PC-3 (cell line): ENCODE measurements at regions of chr7 and their contacts with region 1.

Region 1: DNA sequence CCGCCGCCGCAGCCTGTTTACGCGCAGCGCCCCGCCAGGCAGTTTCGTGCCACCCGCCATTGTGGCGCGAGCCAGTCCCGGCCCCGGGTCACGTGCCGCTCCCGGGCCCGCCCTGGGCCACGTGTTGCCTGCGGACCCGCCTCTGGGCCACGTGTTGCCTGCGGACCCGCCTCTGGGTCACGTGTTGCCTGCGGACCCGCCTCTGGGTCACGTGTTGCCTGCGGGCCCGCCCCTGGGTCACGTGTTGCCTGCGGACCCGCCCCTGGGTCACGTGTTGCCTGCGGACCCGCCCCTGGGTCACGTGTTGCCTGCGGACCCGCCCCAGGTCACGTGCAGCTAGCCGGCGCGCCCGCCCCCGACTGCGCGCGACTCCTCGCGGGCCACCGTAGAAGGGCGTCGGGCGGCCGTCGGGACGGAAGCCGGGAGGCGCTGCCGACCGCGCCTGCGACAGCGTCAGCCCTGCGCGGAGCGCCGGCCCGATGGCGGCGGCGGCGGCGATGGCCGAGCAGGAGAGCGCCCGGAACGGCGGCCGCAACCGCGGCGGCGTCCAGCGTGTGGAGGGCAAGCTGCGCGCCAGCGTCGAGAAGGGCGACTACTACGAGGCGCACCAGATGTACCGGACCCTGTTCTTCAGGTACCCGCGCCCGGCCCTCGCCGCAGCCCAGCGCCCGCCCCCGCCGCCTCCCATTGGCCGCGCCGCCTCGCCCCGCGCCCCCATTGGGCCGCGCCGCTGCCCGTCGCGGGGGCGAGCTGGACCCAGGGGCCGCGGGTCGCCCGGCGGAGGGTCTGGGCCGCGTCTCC is at the start of gene GET4:
- DNase-seq: peak; percentile 90
- ATAC-seq: peak; percentile 80
- H3K4me3 ChIP-seq: peak within 1 kb of the TSS; percentile 97
- H3K27ac ChIP-seq: peak within 1 kb of the TSS; percentile 30
- H3K4me1 ChIP-seq: peaks cover 28% of the 10 kb centered on the region
- H3K27me3 ChIP-seq: no peaks in the 10 kb centered on the region
- CTCF ChIP-seq: no peak
- total RNA-seq, gene GET4: 96.7 and 115 TPM in 2 replicates

Region 2: DNA sequence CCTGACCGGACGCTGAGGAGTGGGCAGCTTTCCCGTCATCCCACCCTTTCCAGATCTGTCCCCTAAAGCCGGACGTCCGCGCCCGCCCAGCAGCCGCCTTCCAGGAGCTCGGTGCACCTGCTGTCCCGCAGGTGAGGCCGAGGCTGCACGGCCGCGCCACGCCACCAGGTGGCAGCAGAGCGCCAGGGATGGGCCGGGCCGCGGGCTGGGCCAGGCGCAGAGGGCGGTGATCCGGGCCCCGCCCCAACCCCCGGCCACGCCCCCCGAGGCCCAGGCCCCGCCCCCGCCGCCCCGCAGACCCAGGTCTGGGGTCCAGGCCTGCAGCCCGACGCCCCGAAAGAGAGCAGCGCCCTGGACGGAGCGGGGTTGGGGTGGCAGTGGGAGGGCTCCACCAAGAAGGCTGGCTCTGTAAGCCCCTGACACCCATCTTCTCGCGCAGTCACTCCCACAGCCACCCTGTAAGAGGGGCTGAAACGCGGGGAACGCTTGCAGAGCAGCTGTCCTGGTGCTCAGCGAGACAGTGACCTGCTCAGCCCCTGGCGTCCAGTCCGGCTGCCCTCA is 554.2 kb before region 1 on chr7:
- CTCF ChIA-PET with region 1: no interaction called
- POLR2A ChIA-PET with region 1: no interaction called
- intact Hi-C with region 1: loop called (anchors 5 kb)
- DNase-seq: peak; percentile 81
- ATAC-seq: peak; percentile 97
- H3K4me3 ChIP-seq: no peak overlapping the region
- H3K27ac ChIP-seq: no peak overlapping the region
- H3K4me1 ChIP-seq: no peaks in the 10 kb centered on the region
- H3K27me3 ChIP-seq: peaks cover 18% of the 10 kb centered on the region
- CTCF ChIP-seq: peak; percentile 68

Region 3: DNA sequence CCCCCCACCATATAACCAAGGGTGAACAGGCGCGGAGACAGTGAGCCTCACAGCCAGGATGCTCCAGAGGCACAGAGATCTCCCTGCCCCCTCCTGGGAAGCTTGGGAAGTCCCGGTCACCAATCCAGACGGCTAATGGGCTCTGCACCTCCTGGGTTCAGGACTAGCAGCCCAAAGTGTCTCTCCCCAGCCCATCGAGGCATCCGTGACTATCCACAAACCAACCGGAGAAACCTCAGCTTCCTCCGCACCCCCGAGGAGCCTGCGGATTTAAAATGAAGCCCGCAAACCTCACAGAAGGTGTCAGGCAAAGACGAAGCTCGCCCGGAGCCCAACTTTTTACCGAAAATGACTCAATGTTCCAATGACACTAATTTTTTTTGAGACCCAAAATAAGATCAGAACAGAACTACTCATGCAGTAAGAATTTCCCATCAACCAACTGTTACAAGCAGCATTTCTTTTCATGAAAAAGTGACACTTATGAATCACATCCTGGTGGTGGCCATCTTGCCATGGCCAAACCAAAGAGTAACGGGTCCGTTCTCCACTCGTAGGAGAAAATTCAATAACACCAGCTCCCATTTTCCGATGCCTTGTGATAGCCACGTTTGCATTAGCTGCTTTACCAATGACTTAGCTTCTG is 362.7 kb before region 1 on chr7:
- CTCF ChIA-PET with region 1: no interaction called
- POLR2A ChIA-PET with region 1: no interaction called
- intact Hi-C with region 1: no loop called
- DNase-seq: peak; percentile 9
- ATAC-seq: no peak
- H3K4me3 ChIP-seq: no peak overlapping the region
- H3K27ac ChIP-seq: no peak overlapping the region
- H3K4me1 ChIP-seq: no peaks in the 10 kb centered on the region
- H3K27me3 ChIP-seq: no peaks in the 10 kb centered on the region
- CTCF ChIP-seq: no peak

Region 4: DNA sequence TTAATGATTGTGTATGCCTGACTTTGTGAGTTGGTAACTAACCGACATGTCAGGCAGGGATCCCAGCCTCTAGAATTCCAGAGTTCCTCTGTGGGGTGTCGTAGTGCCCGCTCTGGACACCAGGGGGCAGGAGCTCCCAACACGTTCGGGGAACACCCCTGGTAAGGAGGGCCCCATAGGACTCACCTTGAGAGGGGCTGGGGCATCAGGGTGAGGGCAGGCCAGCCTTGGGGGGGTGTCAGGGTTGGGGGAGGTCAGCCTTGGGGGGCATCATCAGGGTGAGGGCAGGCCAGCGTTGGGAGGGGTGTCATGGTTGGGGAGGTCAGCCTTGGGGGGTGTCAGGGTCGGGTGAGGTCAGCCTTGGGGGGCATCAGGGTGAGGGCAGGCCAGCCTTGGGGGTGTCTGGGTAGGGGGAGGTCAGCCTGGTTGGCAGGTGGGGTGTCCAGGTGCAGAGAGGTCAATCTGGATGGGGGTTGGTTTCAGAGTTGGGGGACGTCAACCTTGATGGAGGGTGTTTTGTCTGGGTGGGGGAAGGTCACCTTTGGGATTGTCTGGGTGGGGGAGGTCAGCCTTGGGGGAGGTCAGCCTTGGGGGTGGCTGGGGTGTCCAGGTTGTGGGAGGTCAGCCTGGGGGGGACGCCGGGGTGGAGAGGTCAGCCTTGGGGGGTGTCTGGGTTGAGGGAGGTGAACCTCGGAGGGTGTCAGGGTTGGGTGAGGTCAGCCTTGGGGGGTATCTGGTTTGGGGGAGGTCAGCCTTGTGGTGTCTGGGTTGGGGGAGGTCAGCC is 89.7 kb before region 1 on chr7:
- CTCF ChIA-PET with region 1: no interaction called
- POLR2A ChIA-PET with region 1: no interaction called
- intact Hi-C with region 1: loop called (anchors 1 kb)
- DNase-seq: peak; percentile 71
- ATAC-seq: peak; percentile 85
- H3K4me3 ChIP-seq: no peak overlapping the region
- H3K27ac ChIP-seq: no peak overlapping the region
- H3K4me1 ChIP-seq: no peaks in the 10 kb centered on the region
- H3K27me3 ChIP-seq: no peaks in the 10 kb centered on the region
- CTCF ChIP-seq: peak; percentile 88

Region 5: GRCh38 chr7:816300-816750 is 60.0 kb before region 1 on chr7:
- CTCF ChIA-PET with region 1: interaction called, 3 read pairs
- POLR2A ChIA-PET with region 1: interaction called, 4 read pairs
- intact Hi-C with region 1: loop called (anchors 1 kb)
- DNase-seq: peak; percentile 98
- ATAC-seq: peak; percentile 87
- H3K4me3 ChIP-seq: peak overlapping the region; percentile 84
- H3K27ac ChIP-seq: no peak overlapping the region
- H3K4me1 ChIP-seq: peaks cover 40% of the 10 kb centered on the region
- H3K27me3 ChIP-seq: no peaks in the 10 kb centered on the region
- CTCF ChIP-seq: no peak

Region 6: GRCh38 chr7:836411-837400 is 39.7 kb before region 1 on chr7:
- CTCF ChIA-PET with region 1: interaction called, 14 read pairs
- POLR2A ChIA-PET with region 1: no interaction called
- intact Hi-C with region 1: loop called (anchors 1 kb)
- DNase-seq: no peak
- ATAC-seq: peak; percentile 14
- H3K4me3 ChIP-seq: peak overlapping the region; percentile 10; the same call in 1 of the 2 replicates
- H3K27ac ChIP-seq: peak overlapping the region; percentile 86
- H3K4me1 ChIP-seq: peaks cover 39% of the 10 kb centered on the region
- H3K27me3 ChIP-seq: no peaks in the 10 kb centered on the region
- CTCF ChIP-seq: peak; percentile 68

Region 7: GRCh38 chr7:954330-955238 is 78.2 kb after region 1 on chr7 and contains the start of gene ADAP1:
- CTCF ChIA-PET with region 1: no interaction called
- POLR2A ChIA-PET with region 1: no interaction called
- intact Hi-C with region 1: no loop called
- DNase-seq: peak; percentile 62
- ATAC-seq: peak; percentile 56
- H3K4me3 ChIP-seq: peak within 1 kb of the TSS; percentile 74
- H3K27ac ChIP-seq: no peak within 1 kb of the TSS
- H3K4me1 ChIP-seq: peaks cover 12% of the 10 kb centered on the region
- H3K27me3 ChIP-seq: no peaks in the 10 kb centered on the region
- CTCF ChIP-seq: no peak
- total RNA-seq, gene ADAP1: 31.2 and 36.4 TPM in 2 replicates